Motor neuron (in vitro differentiated cells): ENCODE measurements at regions of chr14 and their contacts with region 1.

Region 1: DNA sequence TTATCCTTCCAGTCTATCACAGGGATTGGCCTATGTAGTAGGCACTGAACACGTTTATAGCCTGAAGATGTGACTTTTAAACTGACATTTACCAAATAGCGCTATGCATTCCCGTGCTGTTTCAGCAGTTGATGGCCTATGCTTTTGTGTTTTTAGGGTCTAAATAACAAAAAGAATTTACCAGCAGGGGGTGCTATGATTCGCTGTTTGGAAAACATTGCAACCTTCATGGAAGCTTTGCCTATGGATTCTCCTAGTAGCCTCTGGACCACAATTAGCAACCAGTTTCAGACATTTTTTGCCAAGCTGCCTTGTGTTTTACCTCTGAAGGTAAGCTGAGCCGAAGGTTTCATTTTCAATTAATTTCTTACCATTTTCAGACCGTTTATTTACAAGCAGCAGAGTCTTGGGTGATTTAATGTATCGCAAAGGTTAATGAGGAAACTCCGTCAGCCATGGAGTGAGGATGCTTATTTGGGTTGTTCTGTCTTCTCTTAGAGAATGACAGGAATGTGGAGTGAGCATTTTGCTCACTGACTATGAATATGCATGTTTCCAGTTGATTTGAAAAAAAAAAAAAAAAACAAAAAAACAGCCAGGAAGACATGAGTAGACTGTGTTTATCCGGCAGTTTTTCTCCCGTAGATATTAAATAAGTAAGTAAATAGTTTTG is 133.1 kb downstream of the PRIMA1 start:
- ATAC-seq: peak; percentile 50 to 85 (median 70)
- H3K4me3 ChIP-seq: no peak overlapping the region
- H3K27ac ChIP-seq: no peak overlapping the region
- H3K4me1 ChIP-seq: no peaks in the 10 kb centered on the region

Region 2: DNA sequence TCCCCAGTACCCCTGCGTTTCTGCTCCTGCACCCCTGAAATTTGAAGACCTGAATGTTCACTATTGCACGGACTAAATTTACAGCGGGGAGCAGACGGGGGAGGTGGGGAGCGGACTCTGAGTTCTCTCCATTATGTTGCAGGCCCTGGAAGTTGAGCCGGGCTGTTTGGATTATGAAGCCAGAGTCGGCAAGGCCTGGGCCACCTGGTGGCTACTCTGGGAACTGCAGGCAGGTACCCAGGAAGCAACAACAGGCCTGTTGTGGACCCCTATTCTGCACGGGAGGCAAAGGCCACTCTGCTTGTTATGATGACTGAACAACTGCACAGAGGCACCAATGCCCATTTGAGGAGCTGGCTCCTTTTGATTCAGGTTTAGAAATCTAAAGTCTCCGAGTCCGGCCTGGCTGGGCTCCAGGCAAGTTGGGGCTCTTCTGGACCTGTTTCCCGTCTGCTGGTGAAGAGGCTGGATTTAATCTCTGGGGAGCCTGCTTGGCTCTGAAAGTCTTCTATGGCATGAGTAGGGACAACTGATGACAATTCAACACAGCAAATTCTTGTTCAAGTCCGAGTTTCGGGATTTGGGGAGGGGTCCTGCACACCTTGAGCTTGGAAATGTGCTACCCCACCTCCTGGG is 237.8 kb after region 1 on chr14:
- in situ Hi-C with region 1: loop called in 2 of 9 experiments (anchors 25 kb)
- ATAC-seq: peak in 7 of 8 experiments; percentile 25 to 88 (median 49)
- H3K4me3 ChIP-seq: no peak overlapping the region
- H3K27ac ChIP-seq: peak overlapping the region; percentile 2 to 75
- H3K4me1 ChIP-seq: peaks cover 24 to 37% of the 10 kb centered on the region in 2 donors

Region 3: GRCh38 chr14:93906341-93907329 is 251.4 kb after region 1 on chr14:
- in situ Hi-C with region 1: loop called in 4 of 9 experiments (anchors 10 to 25 kb)
- ATAC-seq: peak; percentile 53 to 88 (median 62)
- H3K4me3 ChIP-seq: no peak overlapping the region
- H3K27ac ChIP-seq: no peak overlapping the region
- H3K4me1 ChIP-seq: peaks cover 0 to 6% of the 10 kb centered on the region in 2 donors